GM18951 (cell line): ENCODE measurements at regions of chr15 and their contacts with region 1.

Region 1: GRCh38 chr15:48352474-48353072 is 21.3 kb downstream of the DUT start:
- POLR2A ChIP-seq: no peak

Region 2: GRCh38 chr15:48250640-48251076 is 101.9 kb before region 1 on chr15:
- in situ Hi-C with region 1: no loop called
- POLR2A ChIP-seq: no peak

Region 3: GRCh38 chr15:48313216-48313615 is 39.4 kb before region 1 on chr15:
- in situ Hi-C with region 1: no loop called
- POLR2A ChIP-seq: no peak

Region 4: GRCh38 chr15:48645558-48646330 is 293.2 kb after region 1 on chr15 and contains the start of gene FBN1:
- in situ Hi-C with region 1: loop called (anchors 25 kb)
- POLR2A ChIP-seq: peak; percentile 88

Region 5: GRCh38 chr15:48810414-48811317 is 458.1 kb after region 1 on chr15 and contains the start of gene CEP152:
- in situ Hi-C with region 1: loop called (anchors 25 kb)
- POLR2A ChIP-seq: peak; percentile 71